CD8-positive, alpha-beta T cell (primary cell): ENCODE measurements at regions of chr2 and their contacts with region 1.

Region 1: GRCh38 chr2:58067001-58067400 is 20.4 kb downstream of the VRK2 start:
- DNase-seq: no peak
- ATAC-seq: no peak
- H3K4me3 ChIP-seq: no peak overlapping the region
- H3K4me3 Mint-ChIP-seq: no peak overlapping the region
- H3K27ac ChIP-seq: no peak overlapping the region
- H3K27ac Mint-ChIP-seq: peak overlapping the region; percentile 41
- H3K4me1 ChIP-seq: peaks cover 15% of the 10 kb centered on the region
- H3K4me1 Mint-ChIP-seq: peaks cover 51% of the 10 kb centered on the region
- H3K27me3 ChIP-seq: no peaks in the 10 kb centered on the region
- H3K27me3 Mint-ChIP-seq: no peaks in the 10 kb centered on the region
- CTCF ChIP-seq: no peak

Region 2: GRCh38 chr2:58032016-58032763 is 34.8 kb before region 1 on chr2:
- CTCF ChIA-PET with region 1: no interaction called
- POLR2A ChIA-PET with region 1: no interaction called
- intact Hi-C with region 1: loop called in 1 of 2 experiments (anchors 5 kb)
- DNase-seq: no peak
- ATAC-seq: no peak
- H3K4me3 ChIP-seq: no peak overlapping the region
- H3K4me3 Mint-ChIP-seq: no peak overlapping the region
- H3K27ac ChIP-seq: no peak overlapping the region
- H3K27ac Mint-ChIP-seq: no peak overlapping the region
- H3K4me1 ChIP-seq: no peaks in the 10 kb centered on the region
- H3K4me1 Mint-ChIP-seq: no peaks in the 10 kb centered on the region
- H3K27me3 ChIP-seq: no peaks in the 10 kb centered on the region
- H3K27me3 Mint-ChIP-seq: no peaks in the 10 kb centered on the region
- CTCF ChIP-seq: no peak